IMR-90 (cell line): ENCODE measurements at regions of chr19 and their contacts with region 1.

Region 1: DNA sequence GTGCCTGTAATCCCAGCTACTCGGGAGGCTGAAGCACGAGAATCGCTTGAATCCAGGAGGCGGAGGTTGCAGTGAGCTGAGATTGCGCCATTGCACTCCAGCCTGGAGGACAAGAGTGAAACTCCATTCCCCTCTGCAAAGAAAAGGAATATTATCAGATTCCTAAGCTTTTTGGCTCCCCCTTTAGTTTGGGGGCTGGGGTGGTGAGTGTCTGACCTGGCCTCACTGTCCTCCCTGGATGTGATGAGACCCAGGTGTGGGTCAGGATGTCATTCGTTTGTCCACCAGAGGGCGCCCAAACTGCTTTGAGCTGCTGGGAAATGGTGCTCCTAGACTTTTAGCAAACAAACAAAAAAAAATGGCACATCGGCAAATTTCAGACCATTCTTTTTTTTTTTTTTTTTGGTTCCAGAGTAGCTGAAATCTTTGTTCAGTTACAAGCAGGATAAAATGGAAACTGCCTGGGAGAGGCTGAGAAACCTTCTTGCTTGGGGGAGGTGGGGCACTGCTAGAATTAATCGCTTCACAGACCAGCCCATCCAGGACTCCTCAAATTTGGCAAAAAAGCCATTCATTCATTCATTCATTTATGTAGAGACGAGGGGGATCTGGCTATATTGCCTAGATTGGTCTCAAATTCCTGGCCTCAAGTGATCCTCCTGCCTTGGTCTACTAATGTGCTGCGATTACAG is 29.4 kb downstream of the SPC24 start:
- DNase-seq: peak; percentile 64
- ATAC-seq: peak; percentile 40; the same call in 1 of the 2 replicates
- H3K4me3 ChIP-seq: no peak overlapping the region
- H3K27ac ChIP-seq: no peak overlapping the region
- H3K4me1 ChIP-seq: peaks cover 2% of the 10 kb centered on the region; the same call in 1 of the 2 replicates
- H3K27me3 ChIP-seq: no peaks in the 10 kb centered on the region
- CTCF ChIP-seq: peak; percentile 69
- POLR2A ChIP-seq: no peak
- RAD21 ChIP-seq: peak; percentile 63

Region 2: GRCh38 chr19:11203194-11204075 is 77.3 kb after region 1 on chr19:
- CTCF ChIA-PET with region 1: interaction called, 6 read pairs
- POLR2A ChIA-PET with region 1: no interaction called
- dilution Hi-C with region 1: no loop called
- in situ Hi-C with region 1: loop called (anchors 5 kb)
- intact Hi-C with region 1: loop called (anchors 1 kb)
- DNase-seq: peak; percentile 71
- ATAC-seq: peak; percentile 80
- H3K4me3 ChIP-seq: no peak overlapping the region
- H3K27ac ChIP-seq: peak overlapping the region; percentile 89
- H3K4me1 ChIP-seq: peaks cover 13% of the 10 kb centered on the region
- H3K27me3 ChIP-seq: no peaks in the 10 kb centered on the region
- CTCF ChIP-seq: peak; percentile 84
- POLR2A ChIP-seq: no peak
- RAD21 ChIP-seq: peak; percentile 86